ENCODE measurements at regions of chr3 and their contacts with region 1.

Region 1: GRCh38 chr3:37202035-37202434 is 27.7 kb upstream of the LRRFIP2 start:
- DNase-seq: no peak
- ATAC-seq: no peak
- H3K4me3 ChIP-seq: no peak overlapping the region
- H3K27ac ChIP-seq: no peak overlapping the region
- H3K4me1 ChIP-seq: no peaks in the 10 kb centered on the region
- H3K27me3 ChIP-seq: no peaks in the 10 kb centered on the region
- CTCF ChIP-seq: no peak

Region 2: GRCh38 chr3:36893137-36893557 is 308.9 kb before region 1 on chr3:
- CTCF ChIA-PET with region 1: no interaction called
- POLR2A ChIA-PET with region 1: no interaction called
- in situ Hi-C with region 1: no loop called
- intact Hi-C with region 1: loop called (anchors 10 kb)
- DNase-seq: no peak
- ATAC-seq: no peak
- H3K4me3 ChIP-seq: no peak overlapping the region
- H3K27ac ChIP-seq: no peak overlapping the region
- H3K4me1 ChIP-seq: no peaks in the 10 kb centered on the region
- H3K27me3 ChIP-seq: no peaks in the 10 kb centered on the region
- CTCF ChIP-seq: no peak

Region 3: GRCh38 chr3:37103103-37103808 is 98.8 kb before region 1 on chr3:
- CTCF ChIA-PET with region 1: no interaction called
- POLR2A ChIA-PET with region 1: no interaction called
- in situ Hi-C with region 1: no loop called
- intact Hi-C with region 1: no loop called
- DNase-seq: no peak
- ATAC-seq: no peak
- H3K4me3 ChIP-seq: no peak overlapping the region
- H3K27ac ChIP-seq: no peak overlapping the region
- H3K4me1 ChIP-seq: no peaks in the 10 kb centered on the region
- H3K27me3 ChIP-seq: no peaks in the 10 kb centered on the region
- CTCF ChIP-seq: no peak

Measured in Panc1 (cell line).